Activated CD4-positive, alpha-beta memory T cell treated with anti-CD3 and anti-CD28 coated beads for 36 hours (primary cell): ENCODE measurements at regions of chr6 and their contacts with region 1.

Region 1: DNA sequence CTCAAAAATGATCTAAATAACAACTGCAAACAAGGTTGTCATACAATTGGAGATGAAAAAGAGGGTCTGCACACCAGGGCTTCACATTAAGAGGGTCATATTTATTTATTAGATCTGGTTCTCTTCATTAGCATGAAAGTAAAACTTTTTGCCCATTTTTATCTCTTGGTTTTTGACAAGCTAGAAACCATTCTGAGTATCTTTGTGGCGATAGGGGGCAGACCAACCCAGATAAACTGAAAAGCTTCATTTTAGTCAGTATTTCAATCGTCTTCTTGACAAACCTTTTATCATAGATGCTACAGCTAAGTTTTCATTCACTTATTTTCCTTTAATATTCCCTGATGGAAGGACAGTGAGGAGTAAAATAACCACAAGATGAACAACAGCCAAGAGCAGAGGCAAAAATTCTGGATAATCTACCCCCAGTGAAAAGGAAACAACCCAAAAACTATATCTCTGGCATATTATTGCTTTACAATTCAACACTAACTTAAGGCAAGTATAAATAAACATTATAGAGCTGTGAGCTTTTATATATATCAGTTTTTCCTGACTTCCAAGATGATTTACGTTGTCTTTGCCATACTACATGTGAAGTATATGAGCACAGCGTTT is 45.2 kb downstream of the THEMIS start:
- DNase-seq: peak; percentile 54
- H3K4me3 Mint-ChIP-seq: peak overlapping the region; percentile 38
- H3K27ac Mint-ChIP-seq: peak overlapping the region; percentile 30
- H3K4me1 Mint-ChIP-seq: peaks cover 76% of the 10 kb centered on the region
- H3K27me3 Mint-ChIP-seq: no peaks in the 10 kb centered on the region

Region 2: GRCh38 chr6:127737009-127737486 is 118.6 kb before region 1 on chr6:
- CTCF ChIA-PET with region 1: interaction called, 51 read pairs
- POLR2A ChIA-PET with region 1: no interaction called
- intact Hi-C with region 1: loop called (anchors 1 kb)
- DNase-seq: peak; percentile 30
- H3K4me3 Mint-ChIP-seq: no peak overlapping the region
- H3K27ac Mint-ChIP-seq: peak overlapping the region; percentile 25
- H3K4me1 Mint-ChIP-seq: peaks cover 44% of the 10 kb centered on the region
- H3K27me3 Mint-ChIP-seq: no peaks in the 10 kb centered on the region

Region 3: GRCh38 chr6:127869772-127870404 is 14.2 kb after region 1 on chr6:
- CTCF ChIA-PET with region 1: interaction called, 48 read pairs
- POLR2A ChIA-PET with region 1: no interaction called
- intact Hi-C with region 1: no loop called
- DNase-seq: no peak
- H3K4me3 Mint-ChIP-seq: peak overlapping the region; percentile 14
- H3K27ac Mint-ChIP-seq: peak overlapping the region; percentile 21
- H3K4me1 Mint-ChIP-seq: peaks cover 47% of the 10 kb centered on the region
- H3K27me3 Mint-ChIP-seq: no peaks in the 10 kb centered on the region

Region 4: GRCh38 chr6:127918506-127919427 is 63.1 kb after region 1 on chr6:
- CTCF ChIA-PET with region 1: interaction called, 18 read pairs
- POLR2A ChIA-PET with region 1: no interaction called
- intact Hi-C with region 1: no loop called
- DNase-seq: no peak
- H3K4me3 Mint-ChIP-seq: peak overlapping the region; percentile 49
- H3K27ac Mint-ChIP-seq: peak overlapping the region; percentile 44
- H3K4me1 Mint-ChIP-seq: peaks cover 85% of the 10 kb centered on the region
- H3K27me3 Mint-ChIP-seq: no peaks in the 10 kb centered on the region

Region 5: DNA sequence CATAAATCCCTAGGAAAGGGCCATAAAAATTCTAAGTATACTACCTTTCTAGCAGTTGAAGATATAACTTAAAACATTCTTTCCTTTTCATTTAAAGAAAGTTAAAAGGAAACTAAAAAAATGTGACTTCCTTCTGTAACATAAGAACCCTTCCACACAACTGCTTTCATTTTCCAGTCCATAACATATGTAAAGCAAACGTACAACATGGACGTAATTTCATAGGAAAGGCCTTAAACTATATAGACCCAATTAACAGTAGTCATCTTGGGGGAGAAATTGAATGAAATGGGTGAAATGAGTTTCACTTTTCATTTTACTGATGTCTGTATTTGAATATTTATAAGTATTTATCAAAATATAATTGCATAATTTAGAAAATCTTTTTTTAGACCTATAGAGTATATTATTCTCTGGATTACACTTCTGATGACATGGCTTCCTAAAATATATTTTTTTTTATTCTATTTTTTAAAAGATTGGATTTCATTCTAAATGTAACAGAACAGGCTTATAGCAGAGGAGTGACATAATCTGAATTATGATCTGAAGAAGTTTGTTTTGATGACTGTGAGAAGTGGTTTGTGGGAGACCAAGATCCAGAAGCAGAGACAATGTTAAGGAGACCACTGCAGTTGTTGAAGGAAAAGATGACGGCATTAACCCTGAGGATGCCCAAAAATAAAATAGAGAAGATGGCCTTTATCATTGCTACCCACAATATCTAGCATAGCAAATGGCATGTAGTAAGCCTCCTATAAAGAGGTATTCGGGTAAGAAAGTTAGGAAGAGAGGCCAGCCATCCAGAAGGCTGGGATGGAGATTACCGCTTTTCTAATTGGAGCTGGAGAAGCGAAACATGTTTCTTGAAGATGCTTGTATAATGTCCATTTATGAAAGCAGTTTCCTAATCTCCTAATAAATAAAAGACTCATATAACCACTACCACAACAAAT is 404.4 kb after region 1 on chr6:
- CTCF ChIA-PET with region 1: no interaction called
- POLR2A ChIA-PET with region 1: no interaction called
- intact Hi-C with region 1: loop called (anchors 10 kb)
- DNase-seq: no peak
- H3K4me3 Mint-ChIP-seq: peak overlapping the region; percentile 14
- H3K27ac Mint-ChIP-seq: no peak overlapping the region
- H3K4me1 Mint-ChIP-seq: peaks cover 22% of the 10 kb centered on the region
- H3K27me3 Mint-ChIP-seq: no peaks in the 10 kb centered on the region

Region 6: DNA sequence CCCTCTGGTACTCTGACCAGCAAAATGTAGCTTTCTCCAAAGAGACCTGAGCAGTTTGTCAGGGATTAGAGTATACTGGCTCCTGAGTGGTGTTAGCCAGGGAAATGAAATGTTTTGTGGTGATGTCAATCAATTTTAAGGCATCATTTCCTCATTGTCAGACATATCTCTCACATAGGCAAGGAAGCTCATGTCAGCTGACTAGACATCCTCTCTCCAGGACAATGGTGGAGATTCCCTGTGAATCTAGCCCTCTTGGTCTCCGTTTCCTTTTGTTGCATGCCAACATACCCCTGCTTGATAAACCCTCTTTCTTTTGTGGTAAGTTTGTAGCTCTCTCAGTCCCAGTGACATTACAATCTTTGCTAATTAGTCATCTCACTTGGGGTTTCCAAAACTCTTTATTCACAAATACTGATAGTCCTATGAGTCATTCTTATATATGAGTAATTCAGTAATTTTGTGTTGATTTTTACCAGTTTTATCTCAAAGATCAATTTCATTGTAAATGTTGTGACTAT is 800.4 kb after region 1 on chr6:
- CTCF ChIA-PET with region 1: no interaction called
- POLR2A ChIA-PET with region 1: no interaction called
- intact Hi-C with region 1: loop called (anchors 10 kb)
- DNase-seq: peak; percentile 16
- H3K4me3 Mint-ChIP-seq: no peak overlapping the region
- H3K27ac Mint-ChIP-seq: peak overlapping the region; percentile 74
- H3K4me1 Mint-ChIP-seq: peaks cover 31% of the 10 kb centered on the region
- H3K27me3 Mint-ChIP-seq: peaks cover 10% of the 10 kb centered on the region